CD4-positive, alpha-beta T cell (primary cell): ENCODE measurements at regions of chr16 and their contacts with region 1.

Region 1: GRCh38 chr16:30429678-30430427 is at the start of gene DCTPP1:
- DNase-seq: peak; percentile 89 to 99 (median 93)
- ATAC-seq: peak; percentile 96
- H3K4me3 ChIP-seq: peak within 1 kb of the TSS; percentile 97
- H3K4me3 Mint-ChIP-seq: no peak within 1 kb of the TSS
- H3K27ac ChIP-seq: peak within 1 kb of the TSS; percentile 70 to 81
- H3K27ac Mint-ChIP-seq: no peak within 1 kb of the TSS
- H3K4me1 ChIP-seq: peaks cover 38% of the 10 kb centered on the region
- H3K4me1 Mint-ChIP-seq: peaks cover 21% of the 10 kb centered on the region
- H3K27me3 ChIP-seq: no peaks in the 10 kb centered on the region
- H3K27me3 Mint-ChIP-seq: no peaks in the 10 kb centered on the region
- CTCF ChIP-seq: peak; percentile 75
- total RNA-seq, gene DCTPP1: 5.4 to 6.5 TPM

Region 2: DNA sequence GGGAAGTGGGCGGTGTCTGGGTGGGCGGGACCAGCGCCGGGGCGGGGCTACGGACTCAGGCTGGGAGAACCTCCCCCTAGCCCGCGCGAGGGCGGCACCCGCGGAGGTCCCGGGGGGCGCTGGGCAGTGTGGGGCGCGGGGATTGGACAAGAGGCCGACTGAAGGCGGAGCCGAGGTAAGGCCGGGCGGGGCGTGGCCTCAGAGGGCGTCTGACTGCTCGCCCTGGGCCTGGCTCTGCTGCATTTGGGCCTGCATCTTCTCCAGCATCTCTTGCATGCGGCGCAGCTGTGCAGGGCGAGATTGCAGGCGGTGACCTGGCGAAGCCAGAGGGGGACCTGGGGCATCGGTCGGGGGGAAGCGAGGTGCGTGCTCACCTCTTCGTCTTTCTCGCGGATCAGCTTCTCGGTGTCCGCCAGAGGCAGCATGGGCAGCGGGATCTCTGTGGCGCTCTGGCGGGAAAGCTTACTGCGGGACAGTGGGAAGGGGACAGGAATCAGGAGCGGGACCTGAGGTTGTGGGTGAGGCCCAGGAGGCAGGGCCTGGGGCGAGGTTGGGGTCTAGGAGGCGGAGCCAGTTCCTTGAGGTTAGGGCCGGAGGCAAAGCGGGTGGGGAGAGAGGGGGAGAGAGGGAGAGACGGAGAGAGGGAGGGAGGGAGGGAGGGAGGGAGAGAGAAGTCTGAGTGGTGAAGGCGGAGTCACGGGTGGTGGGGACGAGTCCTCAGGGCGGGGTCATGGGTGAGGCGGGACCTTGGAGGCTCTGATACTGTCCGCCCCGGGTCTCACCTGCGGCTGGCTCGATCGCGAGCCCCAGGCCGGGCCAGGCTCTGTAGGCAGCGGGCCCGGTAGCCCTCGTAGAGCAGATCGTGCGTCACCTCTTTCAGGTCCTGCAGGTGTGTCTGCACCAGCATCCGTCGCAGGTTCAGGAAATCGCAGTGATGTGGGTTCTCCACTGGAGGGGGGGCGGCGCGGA is 51.3 kb before region 1 on chr16:
- CTCF ChIA-PET with region 1: interaction called, 3 read pairs
- POLR2A ChIA-PET with region 1: interaction called, 24 read pairs
- intact Hi-C with region 1: loop called in 1 of 2 experiments (anchors 1 kb)
- DNase-seq: peak; percentile 98 to 100 (median 100)
- ATAC-seq: peak; percentile 74
- H3K4me3 ChIP-seq: peak overlapping the region; percentile 71
- H3K4me3 Mint-ChIP-seq: peak overlapping the region; percentile 99
- H3K27ac ChIP-seq: peak overlapping the region; percentile 100
- H3K27ac Mint-ChIP-seq: peak overlapping the region; percentile 100
- H3K4me1 ChIP-seq: peaks cover 79% of the 10 kb centered on the region
- H3K4me1 Mint-ChIP-seq: peaks cover 60% of the 10 kb centered on the region
- H3K27me3 ChIP-seq: no peaks in the 10 kb centered on the region
- H3K27me3 Mint-ChIP-seq: no peaks in the 10 kb centered on the region
- CTCF ChIP-seq: no peak

Region 3: DNA sequence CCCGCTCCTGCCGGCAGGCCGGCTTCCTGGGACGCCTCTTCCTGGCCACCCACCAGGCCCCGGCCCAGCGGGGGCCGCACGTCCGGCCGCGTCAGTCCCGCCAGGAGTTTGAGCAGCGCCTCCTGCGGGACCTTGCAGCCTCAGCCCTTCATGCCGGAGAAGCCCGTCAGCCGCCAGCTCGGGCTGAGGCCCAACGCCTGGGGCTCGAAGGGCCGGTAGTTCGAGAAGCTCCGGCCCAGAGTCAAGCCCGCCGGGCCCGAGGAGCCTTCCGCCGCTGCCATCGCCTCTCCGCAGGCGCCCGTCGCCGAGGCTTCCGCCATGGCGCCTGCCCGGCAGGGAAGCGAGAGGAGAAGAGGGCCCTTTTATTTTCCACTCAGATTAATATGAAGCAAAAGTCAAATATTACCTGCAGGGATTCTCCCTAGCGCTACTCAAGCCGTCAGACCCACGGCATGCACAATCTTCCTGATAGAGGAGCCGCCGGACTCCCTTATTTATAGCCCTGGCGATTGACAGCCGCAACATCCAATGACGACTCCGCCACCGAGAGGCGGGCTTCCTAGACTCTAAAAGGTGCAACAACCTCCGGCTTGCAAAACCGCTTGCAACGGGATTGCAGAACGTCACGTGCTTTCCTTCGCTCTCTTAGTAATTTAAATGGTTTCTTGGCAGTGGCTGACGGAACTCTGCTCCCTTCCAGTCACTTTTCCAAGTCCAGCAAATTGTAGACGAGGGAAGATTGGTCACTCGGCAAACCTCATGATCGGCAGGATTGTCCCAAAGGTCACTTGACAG is 15.8 kb after region 1 on chr16 and contains the start of gene SEPHS2:
- CTCF ChIA-PET with region 1: interaction called, 14 read pairs
- POLR2A ChIA-PET with region 1: interaction called, 7 read pairs
- intact Hi-C with region 1: loop called (anchors 1 to 2 kb)
- DNase-seq: peak; percentile 93 to 98 (median 96)
- ATAC-seq: peak; percentile 97
- H3K4me3 ChIP-seq: peak within 1 kb of the TSS; percentile 83
- H3K4me3 Mint-ChIP-seq: peak within 1 kb of the TSS; percentile 96
- H3K27ac ChIP-seq: peak within 1 kb of the TSS; percentile 76 to 88
- H3K27ac Mint-ChIP-seq: peak within 1 kb of the TSS; percentile 89
- H3K4me1 ChIP-seq: peaks cover 37% of the 10 kb centered on the region
- H3K4me1 Mint-ChIP-seq: peaks cover 44% of the 10 kb centered on the region
- H3K27me3 ChIP-seq: no peaks in the 10 kb centered on the region
- H3K27me3 Mint-ChIP-seq: no peaks in the 10 kb centered on the region
- CTCF ChIP-seq: peak; percentile 16
- total RNA-seq, gene SEPHS2: 25.4 to 25.9 TPM

Region 4: DNA sequence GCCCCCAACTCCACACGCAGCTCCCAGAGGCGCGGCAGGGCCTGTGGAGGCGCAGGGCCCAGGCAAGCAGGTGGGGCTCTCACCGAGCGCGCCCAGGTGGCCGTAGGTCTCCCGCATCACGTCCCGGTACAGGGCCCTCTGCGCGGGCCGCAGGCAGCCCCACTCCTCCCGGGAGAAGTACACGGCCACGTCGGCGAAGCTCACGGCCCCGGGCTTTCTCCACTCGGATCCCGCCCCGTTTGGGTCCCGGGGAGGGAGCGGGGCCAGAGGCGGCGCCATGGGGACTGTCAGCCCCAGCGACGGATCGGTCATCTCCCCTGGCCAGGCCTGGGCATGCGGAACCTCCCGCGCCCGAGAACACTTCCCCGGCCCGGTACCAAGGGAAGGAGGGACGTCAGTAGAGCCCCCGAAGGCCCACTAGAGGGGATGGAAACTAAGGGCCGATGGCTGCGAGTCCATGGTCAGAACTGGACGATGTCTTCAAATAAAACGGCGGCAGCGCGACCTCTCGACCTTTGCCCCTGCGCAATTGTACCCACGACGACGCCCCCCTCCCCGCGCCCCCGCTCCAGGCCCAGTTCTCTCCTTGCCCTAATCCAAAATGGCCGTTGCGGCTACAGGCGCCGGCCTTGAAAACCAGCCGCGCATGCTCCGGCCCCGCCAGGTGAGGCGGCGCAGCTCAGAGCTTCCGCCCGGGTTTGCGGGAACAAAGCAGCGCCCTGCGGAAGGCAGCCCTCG is 104.7 kb after region 1 on chr16 and contains the start of gene ZNF747:
- CTCF ChIA-PET with region 1: interaction called, 28 read pairs
- POLR2A ChIA-PET with region 1: interaction called, 33 read pairs
- intact Hi-C with region 1: loop called in 1 of 2 experiments (anchors 1 kb)
- DNase-seq: peak; percentile 88 to 95 (median 92)
- ATAC-seq: peak; percentile 80
- H3K4me3 ChIP-seq: peak within 1 kb of the TSS; percentile 87
- H3K4me3 Mint-ChIP-seq: peak within 1 kb of the TSS; percentile 94
- H3K27ac ChIP-seq: peak within 1 kb of the TSS; percentile 85 to 96
- H3K27ac Mint-ChIP-seq: peak within 1 kb of the TSS; percentile 99
- H3K4me1 ChIP-seq: peaks cover 52% of the 10 kb centered on the region
- H3K4me1 Mint-ChIP-seq: peaks cover 43% of the 10 kb centered on the region
- H3K27me3 ChIP-seq: no peaks in the 10 kb centered on the region
- H3K27me3 Mint-ChIP-seq: no peaks in the 10 kb centered on the region
- CTCF ChIP-seq: no peak
- total RNA-seq, gene ZNF747: 6.3 to 6.7 TPM

Region 5: GRCh38 chr16:30602616-30603277 is 172.9 kb after region 1 on chr16:
- CTCF ChIA-PET with region 1: interaction called, 12 read pairs
- POLR2A ChIA-PET with region 1: interaction called, 6 read pairs
- intact Hi-C with region 1: loop called (anchors 1 to 2 kb)
- DNase-seq: peak in 2 of 14 experiments; percentile 20 to 26
- ATAC-seq: no peak
- H3K4me3 ChIP-seq: no peak overlapping the region
- H3K4me3 Mint-ChIP-seq: no peak overlapping the region
- H3K27ac ChIP-seq: no peak overlapping the region
- H3K27ac Mint-ChIP-seq: no peak overlapping the region
- H3K4me1 ChIP-seq: peaks cover 7% of the 10 kb centered on the region
- H3K4me1 Mint-ChIP-seq: peaks cover 9% of the 10 kb centered on the region
- H3K27me3 ChIP-seq: no peaks in the 10 kb centered on the region
- H3K27me3 Mint-ChIP-seq: no peaks in the 10 kb centered on the region
- CTCF ChIP-seq: no peak

Region 6: DNA sequence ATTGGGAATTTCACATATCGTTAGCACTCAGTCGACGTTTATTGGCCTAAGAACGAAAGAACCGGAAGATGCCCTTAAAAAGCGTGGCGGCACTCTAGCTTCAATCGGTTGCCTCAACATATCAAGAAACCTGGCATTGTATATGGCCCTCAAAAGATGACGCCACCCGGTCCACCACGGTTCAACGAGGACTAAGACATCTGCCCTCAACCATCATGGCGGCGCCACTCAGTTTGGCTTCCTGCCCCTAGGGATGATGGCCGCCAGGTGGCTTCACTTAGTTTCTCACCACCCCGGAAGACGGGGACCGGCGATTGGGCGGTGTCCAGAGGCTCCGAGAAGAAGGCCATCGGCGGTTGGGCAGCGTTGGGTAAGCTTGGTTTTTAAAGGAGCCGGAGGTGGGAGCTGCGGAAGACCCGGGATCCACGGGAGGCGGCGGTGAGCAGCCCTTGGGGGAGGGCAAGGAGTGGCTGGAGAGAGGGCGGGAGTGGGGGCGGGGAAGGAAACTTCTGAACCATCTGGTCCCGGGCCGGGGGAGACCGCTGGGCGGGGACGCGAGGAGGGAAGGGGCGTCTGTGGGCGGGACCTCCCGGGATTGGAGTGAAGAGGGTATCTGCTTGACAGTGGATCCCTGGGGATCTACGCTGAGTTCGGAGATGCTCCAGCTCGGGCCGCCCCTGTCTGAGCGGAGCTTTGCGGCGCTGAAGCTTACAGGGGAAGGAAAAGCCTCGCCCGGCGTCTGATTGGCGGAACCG is 220.7 kb after region 1 on chr16 and contains the start of gene PRR14:
- CTCF ChIA-PET with region 1: interaction called, 3 read pairs
- POLR2A ChIA-PET with region 1: interaction called, 14 read pairs
- intact Hi-C with region 1: no loop called
- DNase-seq: peak; percentile 96 to 99 (median 98)
- ATAC-seq: peak; percentile 89
- H3K4me3 ChIP-seq: peak within 1 kb of the TSS; percentile 86
- H3K4me3 Mint-ChIP-seq: peak within 1 kb of the TSS; percentile 99
- H3K27ac ChIP-seq: peak within 1 kb of the TSS; percentile 84 to 96
- H3K27ac Mint-ChIP-seq: peak within 1 kb of the TSS; percentile 95
- H3K4me1 ChIP-seq: peaks cover 30% of the 10 kb centered on the region
- H3K4me1 Mint-ChIP-seq: peaks cover 22% of the 10 kb centered on the region
- H3K27me3 ChIP-seq: no peaks in the 10 kb centered on the region
- H3K27me3 Mint-ChIP-seq: no peaks in the 10 kb centered on the region
- CTCF ChIP-seq: no peak
- total RNA-seq, gene PRR14: 50.2 to 51.7 TPM